Common myeloid progenitor, CD34-positive (primary cell): ENCODE measurements at regions of chr10 and their contacts with region 1.

Region 1: GRCh38 chr10:30392564-30392990 is 41.4 kb upstream of the MAP3K8 start:
- DNase-seq: peak; percentile 59 to 76 (median 72)
- H3K4me3 ChIP-seq: peak overlapping the region in 4 of 7 experiments; percentile 32 to 75 (median 59)
- H3K27ac ChIP-seq: no peak overlapping the region
- H3K4me1 ChIP-seq: peaks cover 0 to 7% (median 4%) of the 10 kb centered on the region in 4 experiments
- H3K27me3 ChIP-seq: no peaks in the 10 kb centered on the region

Region 2: DNA sequence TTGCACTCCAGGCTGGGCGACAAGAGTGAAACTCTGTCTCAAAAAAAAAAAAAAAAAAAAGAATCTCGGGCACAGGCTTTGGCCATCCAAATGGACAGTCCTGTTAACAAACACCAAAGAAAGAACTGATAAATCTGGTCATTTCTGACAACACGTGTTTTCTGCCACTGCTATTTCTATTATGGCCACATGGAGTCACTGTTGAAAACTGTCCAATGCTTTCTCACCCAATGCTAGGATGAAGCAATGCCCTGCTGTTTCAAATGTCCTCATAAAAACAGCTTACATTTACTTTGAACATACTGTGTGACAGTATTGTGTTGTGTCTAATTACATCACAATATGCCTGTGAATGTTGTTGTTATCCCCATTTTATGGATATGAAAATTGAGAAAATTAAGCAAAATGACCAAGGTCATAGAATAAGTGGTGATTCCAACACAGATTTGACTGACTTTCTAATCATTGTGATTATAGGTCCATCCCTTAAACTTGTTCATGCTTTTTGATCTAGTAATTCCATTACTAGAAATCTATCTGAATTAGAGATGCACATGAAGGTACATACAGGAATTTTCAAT is 21.5 kb after region 1 on chr10:
- CTCF ChIA-PET with region 1: interaction called, 10 read pairs
- POLR2A ChIA-PET with region 1: no interaction called
- DNase-seq: peak; percentile 59 to 82 (median 79)
- H3K4me3 ChIP-seq: no peak overlapping the region
- H3K27ac ChIP-seq: no peak overlapping the region
- H3K4me1 ChIP-seq: peaks cover 5 to 24% (median 14%) of the 10 kb centered on the region in 4 experiments
- H3K27me3 ChIP-seq: no peaks in the 10 kb centered on the region

Region 3: DNA sequence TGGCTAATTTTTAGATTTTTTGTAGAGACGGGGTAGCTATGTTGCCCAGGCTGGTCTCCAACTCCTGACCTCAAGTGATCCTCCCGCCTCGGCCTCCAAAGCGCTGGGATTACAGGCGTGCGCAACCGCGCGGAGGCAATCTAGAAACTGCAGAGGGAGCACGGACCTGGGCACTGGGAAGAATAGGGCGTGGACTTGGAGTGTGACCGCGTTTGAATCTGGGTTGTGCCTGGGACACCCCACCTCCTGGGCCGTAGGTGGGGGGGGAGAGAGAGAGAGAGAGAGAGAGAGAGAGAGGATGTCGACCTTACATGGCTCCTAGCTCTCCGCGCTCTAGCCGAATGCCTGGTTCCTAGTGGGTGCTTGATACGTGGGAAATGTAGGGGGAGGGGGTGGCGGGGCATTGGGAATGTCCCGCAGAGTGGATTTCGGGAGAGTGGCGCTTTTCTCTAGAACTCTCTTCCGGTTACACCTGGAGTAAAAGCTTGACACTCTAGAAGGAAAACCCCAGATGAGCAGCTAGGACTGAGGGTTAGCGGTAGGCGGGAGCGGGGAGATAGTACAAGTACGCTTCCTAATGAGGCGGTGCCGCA is 40.2 kb after region 1 on chr10:
- CTCF ChIA-PET with region 1: no interaction called
- POLR2A ChIA-PET with region 1: no interaction called
- DNase-seq: no peak
- H3K4me3 ChIP-seq: peak overlapping the region; percentile 84 to 97 (median 92)
- H3K27ac ChIP-seq: peak overlapping the region; percentile 72 to 89
- H3K4me1 ChIP-seq: peaks cover 30 to 79% (median 48%) of the 10 kb centered on the region in 4 experiments
- H3K27me3 ChIP-seq: no peaks in the 10 kb centered on the region